PC-3 (cell line): ENCODE measurements at regions of chr1 and their contacts with region 1.

Region 1: GRCh38 chr1:42777852-42778251 is 6.9 kb upstream of the TMEM269 start:
- DNase-seq: peak; percentile 48
- ATAC-seq: peak; percentile 63
- H3K4me3 ChIP-seq: no peak overlapping the region
- H3K27ac ChIP-seq: no peak overlapping the region
- H3K4me1 ChIP-seq: no peaks in the 10 kb centered on the region
- H3K27me3 ChIP-seq: no peaks in the 10 kb centered on the region
- CTCF ChIP-seq: peak; percentile 83

Region 2: DNA sequence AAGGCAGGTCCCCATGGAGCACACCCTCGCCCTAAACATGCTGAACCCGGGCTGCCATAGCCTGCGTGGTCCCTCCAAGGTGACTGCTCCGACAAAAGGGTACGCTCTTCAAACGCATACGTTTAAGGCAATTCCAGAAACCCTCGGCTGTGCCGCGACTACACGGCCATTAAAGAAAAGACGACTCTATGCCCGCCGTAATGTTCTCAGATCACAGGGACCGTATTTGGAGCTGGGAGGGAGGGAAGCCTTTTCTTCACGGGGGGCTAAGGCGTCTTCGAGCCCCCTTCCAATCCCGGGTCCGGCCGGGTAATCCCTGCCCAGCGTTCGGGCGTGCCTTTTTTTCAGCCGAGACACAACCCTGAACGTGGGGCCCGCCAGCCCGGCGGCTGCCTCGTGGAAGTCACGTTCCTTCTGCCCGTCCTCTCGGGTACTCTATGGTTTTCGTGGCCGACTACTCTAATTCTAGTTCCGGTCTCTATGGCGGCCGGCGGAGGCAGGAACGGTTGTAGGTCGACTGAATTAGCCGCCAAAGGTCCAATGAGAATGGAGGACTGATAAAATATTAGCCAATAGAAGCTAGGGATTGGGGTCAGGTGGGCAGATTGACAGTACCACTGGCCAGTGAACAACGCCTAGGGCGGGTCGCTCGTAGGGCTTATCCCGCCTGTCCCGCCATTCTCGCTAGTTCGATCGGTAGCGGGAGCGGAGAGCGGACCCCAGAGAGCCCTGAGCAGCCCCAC is 95.9 kb before region 1 on chr1 and contains the start of gene YBX1:
- CTCF ChIA-PET with region 1: no interaction called
- POLR2A ChIA-PET with region 1: no interaction called
- intact Hi-C with region 1: no loop called
- DNase-seq: peak; percentile 98
- ATAC-seq: peak; percentile 89
- H3K4me3 ChIP-seq: peak within 1 kb of the TSS; percentile 79
- H3K27ac ChIP-seq: peak within 1 kb of the TSS; percentile 68
- H3K4me1 ChIP-seq: peaks cover 38% of the 10 kb centered on the region
- H3K27me3 ChIP-seq: no peaks in the 10 kb centered on the region
- CTCF ChIP-seq: no peak
- total RNA-seq, gene YBX1: 1,259 and 1,468 TPM in 2 replicates

Region 3: GRCh38 chr1:42913426-42914091 is 135.7 kb after region 1 on chr1:
- CTCF ChIA-PET with region 1: interaction called, 3 read pairs
- POLR2A ChIA-PET with region 1: no interaction called
- intact Hi-C with region 1: loop called (anchors 2 kb)
- DNase-seq: peak; percentile 86
- ATAC-seq: peak; percentile 73
- H3K4me3 ChIP-seq: no peak overlapping the region
- H3K27ac ChIP-seq: no peak overlapping the region
- H3K4me1 ChIP-seq: no peaks in the 10 kb centered on the region
- H3K27me3 ChIP-seq: no peaks in the 10 kb centered on the region
- CTCF ChIP-seq: peak; percentile 75